Activated T-helper 1 cell treated with anti-CD3 and anti-CD28 coated beads, Interleukin-12 subunit alpha, Interleukin-12 subunit beta, Interleukin-2, Interleukin-4 antibody, amounts not matched to agents 30 ng/mL and 10 ng/mL and 1 ng/mL, durations not matched to agents 14 hours and 24 hours and 36 hours (primary cell): ENCODE measurements at regions of chr14 and their contacts with region 1.

Region 1: DNA sequence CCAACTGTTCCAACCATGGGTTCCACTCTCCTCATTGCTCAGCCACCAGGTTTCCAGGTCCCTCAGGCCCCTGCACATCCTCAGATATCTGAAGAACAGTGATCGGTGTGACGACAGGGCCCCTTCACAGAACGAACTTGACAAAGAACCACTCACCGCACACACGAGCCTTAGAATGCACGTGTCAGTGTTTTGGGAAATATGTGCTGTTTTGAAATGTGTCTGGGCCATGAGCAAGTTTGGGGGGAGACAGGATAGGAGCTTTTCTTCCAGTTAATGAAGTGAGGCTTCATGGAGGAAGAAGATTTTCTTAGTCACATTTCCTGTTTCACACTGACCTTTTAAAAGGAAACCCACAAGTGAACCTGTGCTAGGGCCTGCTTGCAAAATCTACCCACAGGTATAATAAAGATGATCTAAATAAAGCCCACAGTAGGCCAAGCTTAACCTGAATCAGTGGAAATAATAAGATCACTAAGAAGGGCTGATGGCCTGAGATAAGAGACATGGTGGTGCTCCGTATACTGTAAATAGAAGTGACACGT is 58.6 kb downstream of the ZFP36L1 start:
- DNase-seq: no peak
- H3K4me3 Mint-ChIP-seq: peak overlapping the region; percentile 16
- H3K27ac Mint-ChIP-seq: peak overlapping the region; percentile 77
- H3K4me1 Mint-ChIP-seq: peaks cover 67% of the 10 kb centered on the region
- H3K27me3 Mint-ChIP-seq: no peaks in the 10 kb centered on the region

Region 2: DNA sequence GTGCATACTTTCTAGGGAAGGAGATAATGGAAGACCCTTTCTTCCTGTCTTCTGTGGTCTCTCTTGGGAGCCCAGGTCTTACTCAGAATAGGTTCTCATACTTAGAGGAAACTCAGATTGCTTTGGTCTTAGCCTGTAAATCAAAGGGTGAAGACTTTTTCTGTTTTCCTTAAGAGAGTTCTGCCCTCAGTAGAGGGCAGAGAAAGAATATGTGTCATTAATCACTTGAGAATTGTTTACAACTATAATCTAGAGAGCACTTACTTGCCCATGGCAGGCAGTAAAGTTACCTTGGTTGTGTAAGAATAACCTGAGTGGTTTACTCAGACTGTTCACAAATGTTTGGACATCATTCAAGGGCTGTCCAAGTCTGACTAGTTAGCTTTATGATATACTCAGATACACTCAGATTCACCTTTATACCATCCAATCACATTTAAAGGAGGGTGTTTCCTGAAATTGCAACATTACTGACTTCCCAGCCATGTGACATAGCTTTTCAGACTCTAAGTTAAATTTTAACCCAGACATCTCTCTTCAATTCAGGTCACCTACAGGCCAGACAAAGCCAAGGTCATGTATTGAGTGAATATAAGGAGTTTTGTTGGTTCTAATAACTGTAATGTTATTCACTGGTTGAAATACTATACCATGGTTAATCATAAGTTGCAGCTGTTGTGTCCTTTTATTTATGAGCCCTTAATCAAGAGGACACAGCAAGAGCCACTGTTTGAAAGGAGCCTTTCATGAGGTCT is 542.6 kb before region 1 on chr14:
- intact Hi-C with region 1: no loop called
- DNase-seq: no peak
- H3K4me3 Mint-ChIP-seq: no peak overlapping the region
- H3K27ac Mint-ChIP-seq: no peak overlapping the region
- H3K4me1 Mint-ChIP-seq: no peaks in the 10 kb centered on the region
- H3K27me3 Mint-ChIP-seq: peaks cover 4% of the 10 kb centered on the region

Region 3: DNA sequence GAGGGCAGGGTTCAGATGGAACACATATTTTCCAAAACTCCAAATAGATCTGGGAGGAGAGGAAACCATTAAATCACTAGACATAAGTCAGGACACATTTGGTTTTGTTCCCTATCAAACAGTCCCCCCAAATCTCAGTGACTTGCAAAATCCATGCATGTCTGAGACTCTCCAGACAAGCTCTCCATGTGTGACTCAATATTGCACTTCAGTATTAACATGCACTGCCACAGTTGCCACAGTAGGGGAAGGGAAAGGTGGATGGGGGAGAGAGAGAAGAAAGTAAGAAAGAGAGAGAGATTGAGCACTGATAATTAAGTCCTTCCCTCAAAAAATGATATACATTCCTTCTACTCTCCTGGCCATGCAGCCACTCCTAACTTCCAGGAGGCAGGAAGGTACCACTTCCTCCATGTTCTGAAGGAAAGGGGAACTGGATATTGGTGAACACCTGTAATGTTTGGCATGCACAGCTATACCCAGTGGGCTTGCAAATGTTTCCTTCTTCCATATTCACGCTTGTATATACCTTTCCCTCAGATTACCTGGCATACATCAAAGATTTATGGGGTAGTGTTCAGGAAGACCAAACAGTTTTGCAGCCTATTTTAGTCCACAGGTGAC is 251.4 kb before region 1 on chr14:
- intact Hi-C with region 1: loop called (anchors 5 kb)
- DNase-seq: no peak
- H3K4me3 Mint-ChIP-seq: no peak overlapping the region
- H3K27ac Mint-ChIP-seq: peak overlapping the region; percentile 71
- H3K4me1 Mint-ChIP-seq: peaks cover 34% of the 10 kb centered on the region
- H3K27me3 Mint-ChIP-seq: peaks cover 2% of the 10 kb centered on the region

Region 4: DNA sequence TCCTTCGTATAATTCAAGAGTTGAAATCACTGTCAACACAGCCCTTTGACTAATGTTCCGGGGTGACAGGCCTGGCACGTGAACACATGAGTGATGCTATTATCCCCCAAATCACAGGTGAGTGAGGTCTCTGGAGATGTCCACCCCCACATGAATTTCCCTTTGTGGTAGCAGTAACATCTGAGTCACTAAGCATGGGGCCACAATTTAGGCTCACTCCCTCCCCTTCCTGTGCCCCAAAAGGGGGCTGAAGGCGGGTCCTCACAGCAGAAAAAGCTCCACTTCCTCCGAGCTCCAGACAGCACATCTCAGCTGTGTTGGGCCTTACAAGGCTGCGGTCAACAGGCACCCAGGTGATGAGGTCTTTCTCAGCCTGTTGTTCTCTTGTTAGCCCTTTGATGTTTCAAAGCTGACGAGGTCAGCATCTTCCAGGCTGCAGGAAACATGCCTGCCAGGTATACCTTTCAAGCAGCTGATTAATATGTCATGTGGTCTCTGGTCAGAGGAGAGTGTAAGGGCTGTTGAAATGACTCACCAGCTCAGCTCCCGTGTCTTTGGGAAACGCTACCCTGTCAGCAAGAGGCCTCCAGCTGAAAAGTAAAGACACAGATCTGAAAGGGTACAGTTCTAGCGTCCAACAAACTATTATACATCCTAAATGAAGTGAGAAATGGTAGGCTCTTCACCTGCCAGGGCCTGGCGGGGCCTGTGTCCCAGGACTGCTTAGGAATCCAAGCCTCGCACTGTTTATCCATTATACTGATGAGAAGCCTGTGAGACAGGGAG is 48.7 kb before region 1 on chr14:
- intact Hi-C with region 1: loop called (anchors 1 kb)
- DNase-seq: peak; percentile 71
- H3K4me3 Mint-ChIP-seq: peak overlapping the region; percentile 45
- H3K27ac Mint-ChIP-seq: peak overlapping the region; percentile 86
- H3K4me1 Mint-ChIP-seq: peaks cover 61% of the 10 kb centered on the region
- H3K27me3 Mint-ChIP-seq: peaks cover 2% of the 10 kb centered on the region

Region 5: DNA sequence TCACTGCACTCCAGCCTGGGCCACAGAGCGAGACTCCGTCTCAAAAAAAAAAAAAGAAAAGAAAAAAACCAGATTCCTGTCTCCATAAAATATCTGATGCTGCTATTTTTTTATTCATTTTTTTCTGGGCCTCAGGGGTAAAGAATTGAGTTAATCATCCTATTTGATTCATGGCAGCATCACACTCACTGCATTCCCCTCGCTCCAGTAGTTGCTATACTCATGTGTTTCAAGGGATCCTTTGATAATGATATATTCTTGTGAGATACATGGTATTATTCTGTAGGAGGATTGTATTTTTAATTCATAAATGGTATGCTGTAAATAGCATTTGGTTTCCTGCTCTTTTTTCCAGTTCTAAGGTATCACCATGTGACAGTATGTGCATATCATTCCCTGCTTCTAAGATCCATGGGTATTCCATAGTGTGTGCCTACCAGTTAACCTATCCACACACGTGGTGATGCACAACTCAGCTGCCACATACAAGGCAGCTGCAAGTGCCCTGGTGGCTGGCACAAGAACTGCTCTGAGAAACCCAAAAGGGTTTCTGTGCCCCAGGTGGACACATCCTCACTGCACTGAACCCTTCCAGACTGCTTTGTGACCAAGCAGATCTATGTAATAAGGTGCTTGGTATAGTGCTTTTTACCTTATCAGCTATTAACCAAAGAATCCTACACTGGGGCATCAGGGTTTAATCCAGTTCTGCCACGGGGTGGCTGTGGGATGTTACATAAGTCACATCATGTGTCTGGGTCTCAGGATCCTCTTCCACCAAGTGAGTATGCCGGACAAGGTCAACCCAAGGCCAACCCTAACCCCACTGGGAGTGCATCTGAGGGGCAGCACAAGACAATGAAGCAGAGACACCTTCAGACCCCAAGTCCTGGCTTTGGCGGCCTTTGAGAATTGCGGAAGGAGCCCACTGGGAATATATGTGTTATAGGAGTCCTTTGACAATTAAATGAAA is 16.0 kb before region 1 on chr14:
- intact Hi-C with region 1: loop called (anchors 1 kb)
- DNase-seq: no peak
- H3K4me3 Mint-ChIP-seq: no peak overlapping the region
- H3K27ac Mint-ChIP-seq: no peak overlapping the region
- H3K4me1 Mint-ChIP-seq: peaks cover 56% of the 10 kb centered on the region
- H3K27me3 Mint-ChIP-seq: peaks cover 2% of the 10 kb centered on the region

Region 6: DNA sequence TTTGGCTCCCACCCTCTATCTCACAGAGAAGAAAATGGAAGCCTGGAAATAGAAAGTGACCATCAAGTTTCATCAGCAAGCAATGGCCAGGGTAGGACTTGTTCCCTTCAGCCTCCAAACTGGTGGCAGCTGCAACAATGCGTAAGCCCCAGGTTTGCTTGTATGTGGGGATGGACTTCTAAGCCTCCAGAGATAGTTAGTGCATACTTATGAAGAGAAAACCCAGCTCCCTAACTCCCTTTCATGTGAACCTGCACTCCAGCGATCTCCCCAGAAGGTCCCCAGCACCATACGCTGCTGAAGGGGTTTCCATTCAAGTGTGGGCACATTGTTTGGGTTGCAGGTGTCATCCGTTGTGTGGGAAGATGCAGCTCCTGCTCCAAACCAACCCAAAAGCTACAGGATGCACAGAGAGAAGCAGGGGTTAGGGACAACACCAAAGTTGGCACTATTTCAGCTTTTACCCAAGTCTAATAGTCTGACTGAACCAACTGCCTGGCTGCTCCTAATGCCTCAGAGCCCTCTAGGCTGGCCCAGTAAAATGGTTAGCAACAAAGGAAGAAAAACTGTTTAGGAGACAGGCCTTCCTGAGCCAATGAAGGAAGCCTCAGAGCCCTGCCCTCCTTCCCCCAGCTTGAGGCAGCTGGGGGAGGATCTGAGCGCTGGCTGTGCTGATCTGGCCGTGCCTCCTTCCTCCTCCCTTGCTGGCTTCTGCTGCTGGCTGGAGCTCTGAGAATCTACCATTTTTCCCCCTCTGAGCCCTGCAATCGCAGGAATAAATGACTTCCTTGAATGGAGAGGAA is 46.3 kb after region 1 on chr14:
- intact Hi-C with region 1: loop called (anchors 1 kb)
- DNase-seq: no peak
- H3K4me3 Mint-ChIP-seq: peak overlapping the region; percentile 78
- H3K27ac Mint-ChIP-seq: peak overlapping the region; percentile 93
- H3K4me1 Mint-ChIP-seq: peaks cover 72% of the 10 kb centered on the region
- H3K27me3 Mint-ChIP-seq: no peaks in the 10 kb centered on the region

Region 7: GRCh38 chr14:68824517-68825347 is 90.4 kb after region 1 on chr14:
- intact Hi-C with region 1: no loop called
- DNase-seq: no peak
- H3K4me3 Mint-ChIP-seq: no peak overlapping the region
- H3K27ac Mint-ChIP-seq: no peak overlapping the region
- H3K4me1 Mint-ChIP-seq: peaks cover 22% of the 10 kb centered on the region
- H3K27me3 Mint-ChIP-seq: peaks cover 5% of the 10 kb centered on the region